BJ (cell line): ENCODE measurements at regions of chr1 and their contacts with region 1.

Region 1: GRCh38 chr1:78607334-78607927 is 12.8 kb upstream of the IFI44L start:
- DNase-seq: no peak
- H3K4me3 ChIP-seq: no peak overlapping the region
- H3K27me3 ChIP-seq: no peaks in the 10 kb centered on the region
- CTCF ChIP-seq: peak; percentile 50

Region 2: GRCh38 chr1:77068013-77068412 is 1539.4 kb before region 1 on chr1:
- CTCF ChIA-PET with region 1: no interaction called
- POLR2A ChIA-PET with region 1: no interaction called
- DNase-seq: no peak
- H3K4me3 ChIP-seq: no peak overlapping the region
- H3K27me3 ChIP-seq: no peaks in the 10 kb centered on the region
- CTCF ChIP-seq: no peak

Region 3: GRCh38 chr1:78132174-78132947 is 475.1 kb before region 1 on chr1:
- CTCF ChIA-PET with region 1: interaction called, 104 read pairs
- POLR2A ChIA-PET with region 1: no interaction called
- DNase-seq: no peak
- H3K4me3 ChIP-seq: no peak overlapping the region
- H3K27me3 ChIP-seq: no peaks in the 10 kb centered on the region
- CTCF ChIP-seq: no peak

Region 4: DNA sequence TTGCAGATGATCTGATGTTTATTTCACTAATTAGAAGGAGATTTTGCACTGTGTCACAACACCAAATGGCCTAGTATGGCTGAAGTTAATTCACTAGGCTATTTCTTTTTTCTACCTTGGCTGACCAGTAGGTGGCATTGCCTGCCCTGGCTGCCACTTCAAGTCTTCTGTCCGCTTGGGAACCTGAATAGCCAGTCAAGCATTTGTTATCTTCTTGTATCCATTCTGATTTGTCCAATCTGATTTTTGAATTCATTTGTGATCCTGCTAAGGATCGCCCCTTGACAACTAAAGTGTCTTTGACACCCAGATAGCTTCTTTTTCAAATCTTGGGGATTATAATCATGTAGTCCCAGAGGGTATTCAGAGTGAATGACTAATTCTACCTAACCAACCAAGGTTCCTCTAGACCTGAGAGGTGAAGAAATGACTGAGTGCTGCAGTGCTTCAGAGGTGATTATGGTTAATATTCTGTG is 462.3 kb before region 1 on chr1:
- CTCF ChIA-PET with region 1: interaction called, 78 read pairs
- POLR2A ChIA-PET with region 1: no interaction called
- DNase-seq: no peak
- H3K4me3 ChIP-seq: no peak overlapping the region
- H3K27me3 ChIP-seq: peaks cover 2% of the 10 kb centered on the region; the same call in 1 of the 2 replicates
- CTCF ChIP-seq: peak; percentile 83

Region 5: GRCh38 chr1:78464449-78464891 is 143.0 kb before region 1 on chr1:
- CTCF ChIA-PET with region 1: no interaction called
- POLR2A ChIA-PET with region 1: no interaction called
- DNase-seq: no peak
- H3K4me3 ChIP-seq: no peak overlapping the region
- H3K27me3 ChIP-seq: no peaks in the 10 kb centered on the region
- CTCF ChIP-seq: no peak

Region 6: DNA sequence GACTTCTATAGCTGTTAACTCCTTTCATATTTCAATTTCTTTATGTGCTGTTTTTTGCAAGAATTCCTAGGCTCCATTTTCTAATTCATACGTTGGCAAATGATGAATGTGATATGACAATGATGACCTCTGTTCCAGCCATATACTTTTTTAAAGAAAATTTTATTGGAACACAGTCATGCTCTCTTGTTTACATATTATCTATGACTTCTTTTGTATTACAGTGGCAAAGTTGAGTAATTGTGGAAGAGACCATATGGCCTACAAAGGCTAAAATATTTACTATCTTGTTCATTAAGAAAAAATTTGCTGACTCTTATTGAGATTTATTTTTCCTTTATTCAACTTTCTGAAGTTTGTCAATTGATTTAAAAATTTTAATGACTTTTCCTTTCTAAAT is 19.9 kb after region 1 on chr1:
- CTCF ChIA-PET with region 1: no interaction called
- POLR2A ChIA-PET with region 1: no interaction called
- DNase-seq: no peak
- H3K4me3 ChIP-seq: no peak overlapping the region
- H3K27me3 ChIP-seq: no peaks in the 10 kb centered on the region
- CTCF ChIP-seq: no peak